Breast epithelium (tissue), 4 donors: ENCODE measurements at regions of chr17 and their contacts with region 1.

Region 1: GRCh38 chr17:57762996-57763395 is 17.9 kb upstream of the CCDC182 start:
- DNase-seq: no peak
- H3K4me3 ChIP-seq: no peak overlapping the region
- H3K27ac ChIP-seq: no peak overlapping the region
- H3K4me1 ChIP-seq: no peaks in the 10 kb centered on the region
- H3K27me3 ChIP-seq: no peaks in the 10 kb centered on the region
- CTCF ChIP-seq: no peak
- POLR2A ChIP-seq: no peak

Region 2: DNA sequence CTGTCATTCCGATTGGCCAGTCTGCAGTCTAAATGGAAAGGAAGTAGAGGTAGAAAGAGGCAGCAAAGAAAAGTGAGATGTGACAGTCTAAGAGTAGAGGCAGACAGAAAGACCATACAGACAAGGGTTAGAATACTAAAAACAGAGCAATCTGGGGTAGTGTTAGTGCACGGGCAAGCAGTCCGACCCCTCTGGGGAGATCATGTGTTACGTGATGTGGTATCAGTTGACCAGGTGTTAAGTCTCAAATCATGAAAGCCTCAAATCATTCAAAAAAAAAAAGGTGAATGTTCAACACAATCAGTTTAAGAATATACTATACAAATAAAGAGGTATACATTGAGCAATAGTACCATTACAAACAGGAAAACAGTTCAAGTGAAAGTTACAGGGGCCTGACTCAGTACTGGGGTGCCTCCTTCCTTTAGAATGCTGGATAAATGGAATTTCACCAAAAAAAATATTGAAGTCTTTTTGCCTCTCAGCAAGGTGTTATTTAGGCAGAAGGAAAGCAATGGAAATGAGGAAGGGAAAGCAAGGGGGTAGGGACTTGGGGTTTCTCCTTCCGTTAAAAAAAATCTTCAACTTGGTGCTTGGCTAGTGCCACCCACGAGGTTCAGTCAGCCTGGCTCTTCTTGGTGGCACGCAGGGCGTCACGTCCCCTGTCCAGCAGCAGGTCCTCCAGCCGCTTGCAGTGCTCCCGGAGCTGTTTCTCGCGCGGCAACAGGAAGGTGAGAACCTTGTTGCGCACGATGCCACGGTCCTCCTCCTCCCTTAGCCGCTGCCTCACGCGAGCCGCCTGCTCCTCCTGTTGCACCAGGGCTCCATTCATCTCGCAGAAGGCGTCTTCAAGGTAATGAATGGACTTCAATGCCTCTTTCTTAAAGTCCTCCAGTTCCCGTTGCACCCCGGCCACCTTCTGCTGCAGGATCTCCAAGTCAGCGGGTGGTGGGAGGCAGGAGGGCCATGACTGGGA is 18.5 kb before region 1 on chr17:
- intact Hi-C with region 1: loop called (anchors 1 kb)
- DNase-seq: no peak
- H3K4me3 ChIP-seq: no peak overlapping the region
- H3K27ac ChIP-seq: no peak overlapping the region
- H3K4me1 ChIP-seq: no peaks in the 10 kb centered on the region
- H3K27me3 ChIP-seq: no peaks in the 10 kb centered on the region
- CTCF ChIP-seq: no peak
- POLR2A ChIP-seq: no peak

Region 3: GRCh38 chr17:58232707-58233156 is 469.7 kb after region 1 on chr17:
- intact Hi-C with region 1: no loop called
- DNase-seq: no peak
- H3K4me3 ChIP-seq: no peak overlapping the region
- H3K27ac ChIP-seq: no peak overlapping the region
- H3K4me1 ChIP-seq: no peaks in the 10 kb centered on the region
- H3K27me3 ChIP-seq: no peaks in the 10 kb centered on the region
- CTCF ChIP-seq: no peak
- POLR2A ChIP-seq: no peak